AG04450 (cell line): ENCODE measurements at regions of chr15 and their contacts with region 1.

Region 1: GRCh38 chr15:79184465-79184892 is 93.9 kb upstream of the RASGRF1 start:
- DNase-seq: peak; percentile 8
- H3K4me3 ChIP-seq: no peak overlapping the region
- H3K27ac ChIP-seq: no peak overlapping the region
- H3K27me3 ChIP-seq: peaks cover 10% of the 10 kb centered on the region
- CTCF ChIP-seq: peak; percentile 97

Region 2: DNA sequence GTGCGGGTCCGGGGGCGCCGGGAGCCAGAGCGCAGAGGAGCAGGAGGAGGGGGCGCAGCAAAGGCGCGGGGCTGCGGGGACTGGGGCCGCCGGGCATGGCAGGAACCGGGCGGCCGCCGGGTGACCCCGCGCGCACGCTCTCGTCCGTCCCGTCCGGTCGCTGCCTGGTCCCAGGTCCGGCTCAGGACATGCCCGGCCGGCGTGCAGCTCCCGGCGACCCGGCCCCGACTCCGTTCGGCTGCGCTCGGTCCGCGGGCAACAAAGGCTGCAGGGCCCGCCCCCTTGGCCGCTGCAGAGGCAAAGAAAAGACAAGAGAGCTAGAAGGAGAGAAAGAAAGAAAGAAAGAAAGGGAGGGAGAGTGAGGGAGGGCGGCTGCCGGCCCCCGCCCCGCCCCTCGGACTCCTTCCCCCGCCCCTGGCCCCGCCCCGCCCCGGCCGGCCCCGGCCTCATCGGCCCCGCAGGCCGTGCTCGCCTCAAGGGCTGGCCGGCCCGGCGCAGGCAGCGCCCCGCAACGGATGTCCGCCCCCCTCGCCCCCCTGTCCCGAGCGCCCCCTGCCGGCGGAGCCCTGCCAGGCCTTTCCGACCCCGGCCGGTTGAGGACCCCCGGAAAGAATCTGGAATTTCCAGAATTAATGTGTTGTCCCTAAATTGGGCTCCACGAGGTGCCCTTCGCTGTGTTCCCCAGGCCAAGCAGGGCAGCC is 373.2 kb before region 1 on chr15 and contains the start of gene ADAMTS7:
- CTCF ChIA-PET with region 1: interaction called, 11 read pairs
- POLR2A ChIA-PET with region 1: no interaction called
- DNase-seq: peak; percentile 32
- H3K4me3 ChIP-seq: peak within 1 kb of the TSS; percentile 72
- H3K27ac ChIP-seq: peak within 1 kb of the TSS; percentile 57
- H3K27me3 ChIP-seq: no peaks in the 10 kb centered on the region
- CTCF ChIP-seq: peak; percentile 73
- polyA plus RNA-seq, gene ADAMTS7: 5.0 and 6.4 TPM in 2 replicates

Region 3: GRCh38 chr15:78909791-78910228 is 274.7 kb before region 1 on chr15:
- CTCF ChIA-PET with region 1: interaction called, 33 read pairs
- POLR2A ChIA-PET with region 1: no interaction called
- DNase-seq: no peak
- H3K4me3 ChIP-seq: no peak overlapping the region
- H3K27ac ChIP-seq: peak overlapping the region; percentile 42
- H3K27me3 ChIP-seq: no peaks in the 10 kb centered on the region
- CTCF ChIP-seq: peak; percentile 74

Region 4: GRCh38 chr15:79028411-79028964 is 156.0 kb before region 1 on chr15:
- CTCF ChIA-PET with region 1: interaction called, 68 read pairs
- POLR2A ChIA-PET with region 1: no interaction called
- DNase-seq: no peak
- H3K4me3 ChIP-seq: no peak overlapping the region
- H3K27ac ChIP-seq: no peak overlapping the region
- H3K27me3 ChIP-seq: peaks cover 16% of the 10 kb centered on the region
- CTCF ChIP-seq: peak; percentile 74

Region 5: DNA sequence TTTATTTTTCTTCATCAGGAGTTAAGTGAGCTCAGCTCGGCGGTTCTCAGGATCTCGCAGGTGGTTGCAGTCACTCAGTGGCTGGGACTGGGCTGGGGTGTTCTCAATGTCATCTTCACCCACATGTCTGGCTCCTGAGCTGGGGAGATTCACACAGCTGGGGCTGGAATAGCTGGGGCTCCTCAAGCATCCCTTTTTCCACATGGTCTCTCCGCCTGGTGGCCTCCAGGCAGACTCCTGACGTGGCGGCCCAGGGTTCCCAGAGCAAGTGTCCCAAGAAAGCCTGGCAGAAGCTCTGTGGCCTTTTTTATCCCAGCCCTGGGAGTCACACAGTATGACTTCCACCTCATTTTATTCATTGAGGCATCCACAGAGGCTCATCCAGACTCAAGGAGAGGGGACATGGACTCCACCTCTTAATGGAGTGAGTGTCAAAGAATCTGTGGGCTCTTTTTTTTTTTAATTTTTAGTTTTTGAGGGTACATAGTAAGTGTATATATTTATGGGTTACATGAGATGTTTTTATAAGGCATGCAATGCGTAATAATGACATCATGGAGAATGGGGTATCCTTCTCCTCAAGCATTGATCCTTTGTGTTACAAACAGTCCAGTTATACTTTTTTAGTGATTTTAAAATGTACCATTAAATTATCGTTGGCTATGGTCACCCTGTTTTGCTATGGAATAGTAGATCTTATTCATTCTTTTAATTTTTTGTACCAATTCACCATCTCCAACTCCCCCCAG is 14.2 kb after region 1 on chr15:
- CTCF ChIA-PET with region 1: interaction called, 11 read pairs
- POLR2A ChIA-PET with region 1: no interaction called
- DNase-seq: no peak
- H3K4me3 ChIP-seq: no peak overlapping the region
- H3K27ac ChIP-seq: no peak overlapping the region
- H3K27me3 ChIP-seq: peaks cover 2% of the 10 kb centered on the region
- CTCF ChIP-seq: no peak